Activated naive CD4-positive, alpha-beta T cell treated with anti-CD3 and anti-CD28 coated beads, Interleukin-2, amount 10 ng/mL, durations not matched to agents 7 days and 5 days (primary cell): ENCODE measurements at regions of chr6 and their contacts with region 1.

Region 1: GRCh38 chr6:52284460-52285176 is at the start of gene MCM3:
- DNase-seq: peak; percentile 98
- H3K4me3 Mint-ChIP-seq: no peak within 1 kb of the TSS
- H3K27ac Mint-ChIP-seq: peak within 1 kb of the TSS; percentile 81
- H3K4me1 Mint-ChIP-seq: peaks cover 61% of the 10 kb centered on the region
- H3K27me3 Mint-ChIP-seq: no peaks in the 10 kb centered on the region

Region 2: DNA sequence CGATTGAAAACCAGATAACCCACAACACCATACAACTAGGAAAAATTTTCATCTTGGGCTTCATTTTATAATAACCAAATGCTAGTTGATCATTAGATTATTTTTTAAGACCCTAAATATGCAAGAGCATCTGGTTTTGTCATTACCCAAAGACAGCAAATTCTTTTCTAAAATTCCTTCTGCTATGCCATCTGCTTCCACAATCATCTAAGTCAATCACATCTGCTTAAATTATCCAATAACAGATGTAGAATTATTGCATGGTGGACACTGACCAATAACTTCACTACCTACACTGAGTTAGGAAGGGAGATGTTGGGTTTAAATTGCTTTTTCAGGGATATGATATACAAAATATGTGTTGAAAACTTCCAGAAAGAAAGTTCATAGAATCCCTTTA is 239.1 kb before region 1 on chr6:
- CTCF ChIA-PET with region 1: no interaction called
- DNase-seq: no peak
- H3K4me3 Mint-ChIP-seq: no peak overlapping the region
- H3K27ac Mint-ChIP-seq: no peak overlapping the region
- H3K4me1 Mint-ChIP-seq: no peaks in the 10 kb centered on the region
- H3K27me3 Mint-ChIP-seq: peaks cover 6% of the 10 kb centered on the region

Region 3: GRCh38 chr6:52254731-52255378 is 29.8 kb before region 1 on chr6:
- CTCF ChIA-PET with region 1: no interaction called
- DNase-seq: no peak
- H3K4me3 Mint-ChIP-seq: no peak overlapping the region
- H3K27ac Mint-ChIP-seq: peak overlapping the region; percentile 50
- H3K4me1 Mint-ChIP-seq: peaks cover 38% of the 10 kb centered on the region
- H3K27me3 Mint-ChIP-seq: peaks cover 32% of the 10 kb centered on the region

Region 4: DNA sequence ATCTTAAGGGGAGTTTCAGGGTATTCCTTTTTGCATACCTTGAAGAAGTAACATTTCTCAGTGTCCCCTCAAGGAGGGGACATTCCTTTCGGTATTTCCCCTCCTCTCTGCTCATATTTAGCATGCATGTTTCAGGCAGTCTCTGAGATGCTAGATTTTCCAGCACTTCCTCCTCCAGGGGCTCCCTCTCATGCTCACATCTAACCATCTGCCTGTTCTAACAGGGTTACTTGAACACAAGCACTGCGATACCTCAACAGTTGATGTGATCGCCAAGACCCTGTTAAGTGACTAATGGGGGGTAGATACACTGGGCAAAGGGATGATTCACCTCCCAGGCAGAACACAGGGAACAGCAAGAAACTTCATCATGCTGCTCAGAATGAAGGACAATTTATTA is 12.8 kb after region 1 on chr6:
- CTCF ChIA-PET with region 1: interaction called, 13 read pairs
- DNase-seq: no peak
- H3K4me3 Mint-ChIP-seq: no peak overlapping the region
- H3K27ac Mint-ChIP-seq: no peak overlapping the region
- H3K4me1 Mint-ChIP-seq: peaks cover 21% of the 10 kb centered on the region
- H3K27me3 Mint-ChIP-seq: no peaks in the 10 kb centered on the region

Region 5: DNA sequence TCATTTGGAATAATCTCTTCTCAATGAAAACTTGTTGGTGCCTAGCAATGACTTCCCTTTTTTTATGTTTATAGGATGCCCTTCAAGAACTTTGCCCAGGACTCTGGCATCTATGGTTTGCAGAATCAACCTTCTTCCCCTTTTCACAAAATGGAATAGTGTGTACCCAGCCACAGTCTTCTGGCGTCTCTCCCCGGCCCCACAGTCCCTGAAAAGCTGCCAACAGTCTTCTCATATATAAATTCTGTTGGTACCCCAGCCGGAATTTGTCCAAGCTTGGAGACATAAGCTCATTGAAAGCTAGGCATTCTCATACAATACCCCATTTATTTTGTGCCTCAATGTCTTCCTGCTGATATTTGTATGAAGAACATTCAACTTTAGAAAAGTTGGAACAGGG is 26.3 kb after region 1 on chr6:
- CTCF ChIA-PET with region 1: interaction called, 32 read pairs
- DNase-seq: no peak
- H3K4me3 Mint-ChIP-seq: no peak overlapping the region
- H3K27ac Mint-ChIP-seq: no peak overlapping the region
- H3K4me1 Mint-ChIP-seq: peaks cover 37% of the 10 kb centered on the region
- H3K27me3 Mint-ChIP-seq: no peaks in the 10 kb centered on the region

Region 6: DNA sequence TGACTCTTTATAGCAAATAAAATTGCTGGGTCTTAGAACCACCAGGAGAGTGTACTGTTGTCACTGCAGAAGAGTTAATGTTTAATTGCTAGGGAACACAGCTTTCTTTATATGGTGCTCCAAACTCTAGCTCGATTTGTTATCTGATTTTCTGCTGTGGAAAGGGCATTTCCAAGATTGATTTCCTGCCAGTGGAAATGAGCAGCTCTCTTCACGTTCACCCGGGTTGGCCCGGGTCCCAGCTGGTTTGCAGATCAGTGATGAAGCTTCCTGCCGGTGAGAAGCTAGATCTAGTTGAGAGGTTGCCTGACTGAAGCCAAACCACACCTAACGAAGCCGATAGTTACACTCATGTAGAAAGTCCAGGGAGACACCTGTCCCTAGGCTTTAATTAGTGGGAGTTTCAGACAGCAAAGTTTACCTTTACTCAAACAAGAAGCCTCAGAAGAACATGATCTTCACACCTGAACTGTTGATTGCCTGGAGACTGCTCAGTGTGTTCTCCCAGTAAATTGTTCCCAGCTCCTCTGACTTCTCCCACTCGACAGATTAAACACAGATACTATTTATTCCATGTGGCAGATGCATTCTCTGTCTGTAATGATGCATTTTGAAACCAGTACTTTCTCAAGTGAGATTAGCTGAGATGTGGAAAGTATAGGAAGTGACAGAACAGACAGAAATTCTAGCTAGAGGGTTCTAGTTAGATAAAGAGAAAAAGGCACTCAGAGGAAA is 105.2 kb after region 1 on chr6:
- CTCF ChIA-PET with region 1: interaction called, 29 read pairs
- DNase-seq: peak; percentile 69
- H3K4me3 Mint-ChIP-seq: peak overlapping the region; percentile 66
- H3K27ac Mint-ChIP-seq: peak overlapping the region; percentile 98
- H3K4me1 Mint-ChIP-seq: peaks cover 80% of the 10 kb centered on the region
- H3K27me3 Mint-ChIP-seq: no peaks in the 10 kb centered on the region

Region 7: GRCh38 chr6:52617087-52617486 is 332.5 kb after region 1 on chr6:
- CTCF ChIA-PET with region 1: no interaction called
- DNase-seq: no peak
- H3K4me3 Mint-ChIP-seq: no peak overlapping the region
- H3K27ac Mint-ChIP-seq: no peak overlapping the region
- H3K4me1 Mint-ChIP-seq: no peaks in the 10 kb centered on the region
- H3K27me3 Mint-ChIP-seq: no peaks in the 10 kb centered on the region

Region 8: DNA sequence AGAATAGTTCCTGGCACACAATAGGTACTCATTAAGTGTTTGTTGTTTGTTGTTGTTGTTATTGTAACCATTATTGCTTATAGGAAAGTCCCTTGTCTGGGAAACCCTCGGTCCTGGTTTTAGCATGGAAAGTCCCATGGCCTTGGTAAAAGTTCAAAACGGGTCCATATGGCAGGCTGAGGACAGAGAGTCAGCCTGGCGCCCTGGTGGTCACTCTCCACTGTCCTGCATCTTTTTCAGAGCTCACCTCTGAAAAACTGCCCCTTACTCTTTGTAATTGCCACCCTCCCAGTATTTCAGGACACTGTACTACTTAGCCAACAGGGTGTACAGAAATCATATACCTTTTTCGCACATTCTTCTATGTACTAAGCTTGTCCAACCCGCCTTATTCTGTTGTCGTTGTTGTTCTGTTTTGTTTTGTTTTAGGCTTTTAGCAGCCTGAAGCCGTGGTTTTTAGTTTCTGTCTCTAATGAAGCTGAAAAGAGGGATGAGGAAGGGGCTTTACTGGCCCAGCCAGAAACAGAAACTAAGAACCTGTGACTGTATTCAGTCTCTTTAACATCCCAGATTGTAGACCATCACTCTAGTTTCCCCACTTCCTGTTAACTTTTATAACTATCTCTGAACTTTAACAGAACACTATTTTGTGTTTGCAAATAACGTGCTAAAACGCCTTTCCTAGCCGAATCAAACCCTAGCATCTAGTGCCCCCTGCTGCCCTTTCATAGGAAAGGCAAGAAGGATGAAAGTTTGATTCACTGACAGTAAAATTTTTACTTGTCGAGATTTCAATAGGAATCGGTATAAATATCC is 378.7 kb after region 1 on chr6:
- CTCF ChIA-PET with region 1: interaction called, 12 read pairs
- DNase-seq: peak; percentile 75
- H3K4me3 Mint-ChIP-seq: no peak overlapping the region
- H3K27ac Mint-ChIP-seq: no peak overlapping the region
- H3K4me1 Mint-ChIP-seq: peaks cover 3% of the 10 kb centered on the region
- H3K27me3 Mint-ChIP-seq: no peaks in the 10 kb centered on the region